T-cell (primary cell): ENCODE measurements at regions of chr10 and their contacts with region 1.

Region 1: DNA sequence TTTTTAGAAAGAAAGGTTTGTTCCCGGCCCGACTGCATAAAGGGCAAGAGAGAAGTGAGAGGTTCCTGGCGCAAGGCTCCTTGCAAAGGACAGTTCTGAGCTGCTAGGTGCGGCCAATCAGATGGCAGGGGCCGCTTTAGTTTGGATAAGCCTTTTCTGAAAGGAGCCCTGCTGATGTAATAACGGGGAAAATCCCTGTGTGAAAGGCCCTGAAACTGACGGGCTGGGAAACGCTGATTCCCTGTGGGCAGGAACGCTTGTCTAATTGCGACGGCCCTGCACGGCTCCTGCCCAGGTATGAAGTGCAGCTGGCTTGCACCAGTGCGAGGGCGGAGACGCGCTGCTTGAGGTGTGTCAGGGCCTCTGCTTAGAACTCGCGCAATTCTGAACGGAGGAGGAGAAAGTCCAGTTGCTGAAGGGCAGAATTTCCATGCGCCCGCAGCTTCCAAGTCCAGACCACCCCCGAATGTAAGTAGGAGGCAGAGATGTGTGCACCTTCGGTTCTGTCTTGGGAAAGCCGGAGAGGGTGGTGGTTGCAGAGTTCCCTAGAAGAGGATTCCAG is 30.5 kb downstream of the TACC2 start:
- DNase-seq: no peak
- ATAC-seq: no peak
- H3K4me3 ChIP-seq: no peak overlapping the region
- H3K4me3 Mint-ChIP-seq: no peak overlapping the region
- H3K27ac ChIP-seq: no peak overlapping the region
- H3K27ac Mint-ChIP-seq: no peak overlapping the region
- H3K4me1 ChIP-seq: no peaks in the 10 kb centered on the region
- H3K4me1 Mint-ChIP-seq: no peaks in the 10 kb centered on the region
- H3K27me3 ChIP-seq: peaks cover 0 to 16% of the 10 kb centered on the region in 2 experiments
- H3K27me3 Mint-ChIP-seq: peaks cover 4 to 11% of the 10 kb centered on the region in 2 donors

Region 2: DNA sequence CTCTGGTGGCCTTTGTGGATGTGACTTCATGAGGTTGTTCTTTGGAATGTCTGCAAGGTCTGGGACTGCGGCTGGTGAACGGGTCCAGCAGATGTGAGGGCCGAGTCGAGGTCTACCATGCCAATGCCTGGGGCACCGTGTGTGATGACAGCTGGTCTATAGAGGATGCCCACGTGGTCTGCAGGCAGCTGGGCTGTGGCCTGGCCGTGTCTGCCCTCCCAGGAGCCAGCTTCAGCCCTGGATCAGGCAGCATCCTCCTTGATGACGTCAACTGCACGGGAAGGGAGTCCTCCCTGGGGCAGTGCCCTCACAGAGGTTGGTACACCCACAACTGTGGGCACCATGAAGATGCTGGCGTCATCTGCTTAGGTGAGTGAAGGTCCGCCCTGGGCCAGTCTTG is 779.3 kb after region 1 on chr10:
- CTCF ChIA-PET with region 1: no interaction called
- POLR2A ChIA-PET with region 1: interaction called in 1 of 2 experiments, 13 read pairs
- DNase-seq: no peak
- ATAC-seq: no peak
- H3K4me3 ChIP-seq: no peak overlapping the region
- H3K4me3 Mint-ChIP-seq: no peak overlapping the region
- H3K27ac ChIP-seq: no peak overlapping the region
- H3K27ac Mint-ChIP-seq: no peak overlapping the region
- H3K4me1 ChIP-seq: no peaks in the 10 kb centered on the region
- H3K4me1 Mint-ChIP-seq: no peaks in the 10 kb centered on the region
- H3K27me3 ChIP-seq: peaks cover 0 to 12% of the 10 kb centered on the region in 2 experiments
- H3K27me3 Mint-ChIP-seq: peaks cover 16% of the 10 kb centered on the region in 2 donors